ENCODE measurements at regions of chr13 and their contacts with region 1.

Region 1: GRCh38 chr13:30535046-30535445 is 69.3 kb upstream of the HMGB1 start:
- DNase-seq: no peak
- ATAC-seq: no peak
- H3K4me3 Mint-ChIP-seq: no peak overlapping the region
- H3K27ac Mint-ChIP-seq: no peak overlapping the region
- H3K4me1 Mint-ChIP-seq: no peaks in the 10 kb centered on the region
- H3K27me3 Mint-ChIP-seq: no peaks in the 10 kb centered on the region
- CTCF ChIP-seq: no peak

Region 2: GRCh38 chr13:29835280-29836061 is 699.6 kb before region 1 on chr13:
- CTCF ChIA-PET with region 1: no interaction called
- POLR2A ChIA-PET with region 1: no interaction called
- intact Hi-C with region 1: no loop called
- DNase-seq: no peak
- ATAC-seq: peak; percentile 94
- H3K4me3 Mint-ChIP-seq: no peak overlapping the region
- H3K27ac Mint-ChIP-seq: no peak overlapping the region
- H3K4me1 Mint-ChIP-seq: peaks cover 56% of the 10 kb centered on the region
- H3K27me3 Mint-ChIP-seq: no peaks in the 10 kb centered on the region
- CTCF ChIP-seq: no peak

Region 3: GRCh38 chr13:30142486-30143211 is 392.4 kb before region 1 on chr13:
- CTCF ChIA-PET with region 1: no interaction called
- POLR2A ChIA-PET with region 1: interaction called, 13 read pairs
- intact Hi-C with region 1: no loop called
- DNase-seq: no peak
- ATAC-seq: no peak
- H3K4me3 Mint-ChIP-seq: no peak overlapping the region
- H3K27ac Mint-ChIP-seq: no peak overlapping the region
- H3K4me1 Mint-ChIP-seq: peaks cover 37% of the 10 kb centered on the region
- H3K27me3 Mint-ChIP-seq: peaks cover 2% of the 10 kb centered on the region
- CTCF ChIP-seq: no peak

Region 4: GRCh38 chr13:30443957-30444404 is 91.1 kb before region 1 on chr13:
- CTCF ChIA-PET with region 1: no interaction called
- POLR2A ChIA-PET with region 1: no interaction called
- intact Hi-C with region 1: no loop called
- DNase-seq: peak; percentile 76
- ATAC-seq: peak; percentile 88
- H3K4me3 Mint-ChIP-seq: peak overlapping the region; percentile 79
- H3K27ac Mint-ChIP-seq: peak overlapping the region; percentile 97
- H3K4me1 Mint-ChIP-seq: peaks cover 72% of the 10 kb centered on the region
- H3K27me3 Mint-ChIP-seq: no peaks in the 10 kb centered on the region
- CTCF ChIP-seq: no peak

Region 5: GRCh38 chr13:30504081-30504480 is 31.0 kb before region 1 on chr13:
- CTCF ChIA-PET with region 1: no interaction called
- POLR2A ChIA-PET with region 1: no interaction called
- intact Hi-C with region 1: no loop called
- DNase-seq: no peak
- ATAC-seq: no peak
- H3K4me3 Mint-ChIP-seq: no peak overlapping the region
- H3K27ac Mint-ChIP-seq: no peak overlapping the region
- H3K4me1 Mint-ChIP-seq: no peaks in the 10 kb centered on the region
- H3K27me3 Mint-ChIP-seq: no peaks in the 10 kb centered on the region
- CTCF ChIP-seq: no peak

Region 6: DNA sequence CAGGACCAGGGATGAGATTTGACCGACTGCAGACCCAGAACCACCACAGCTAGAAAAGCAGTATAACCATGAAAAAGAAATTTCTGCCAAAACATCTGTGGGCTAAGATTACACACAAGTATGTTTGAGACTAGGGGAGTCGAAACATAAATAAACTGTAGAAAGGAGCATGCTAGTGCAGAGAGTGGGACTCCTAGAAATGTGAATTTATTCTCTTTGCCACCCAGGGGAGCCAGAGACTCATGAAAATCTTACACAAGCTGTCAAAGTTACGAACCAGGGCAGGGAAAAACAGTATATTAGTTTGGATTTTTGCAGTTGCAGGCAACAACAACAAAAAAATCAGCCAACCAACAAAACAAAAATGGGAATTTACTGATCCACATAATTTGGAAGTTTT is 639.0 kb after region 1 on chr13:
- CTCF ChIA-PET with region 1: no interaction called
- POLR2A ChIA-PET with region 1: no interaction called
- intact Hi-C with region 1: no loop called
- DNase-seq: no peak
- ATAC-seq: no peak
- H3K4me3 Mint-ChIP-seq: no peak overlapping the region
- H3K27ac Mint-ChIP-seq: no peak overlapping the region
- H3K4me1 Mint-ChIP-seq: no peaks in the 10 kb centered on the region
- H3K27me3 Mint-ChIP-seq: peaks cover 16% of the 10 kb centered on the region
- CTCF ChIP-seq: no peak